ENCODE measurements at regions of chr11 and their contacts with region 1.

Region 1: GRCh38 chr11:66677599-66678375 is at the start of gene RBM4B:
- DNase-seq: peak; percentile 94
- H3K4me3 Mint-ChIP-seq: peak within 1 kb of the TSS; percentile 95
- H3K27ac Mint-ChIP-seq: peak within 1 kb of the TSS; percentile 97
- H3K4me1 Mint-ChIP-seq: peaks cover 35% of the 10 kb centered on the region
- H3K27me3 Mint-ChIP-seq: no peaks in the 10 kb centered on the region
- total RNA-seq, gene RBM4B: 14.3 and 16.6 TPM in 2 replicates

Region 2: GRCh38 chr11:66288671-66289547 is 388.9 kb before region 1 on chr11 and contains the start of gene YIF1A:
- intact Hi-C with region 1: loop called (anchors 1 kb)
- DNase-seq: peak; percentile 99
- H3K4me3 Mint-ChIP-seq: peak within 1 kb of the TSS; percentile 95
- H3K27ac Mint-ChIP-seq: peak within 1 kb of the TSS; percentile 99
- H3K4me1 Mint-ChIP-seq: peaks cover 39% of the 10 kb centered on the region
- H3K27me3 Mint-ChIP-seq: peaks cover 28% of the 10 kb centered on the region
- total RNA-seq, gene YIF1A: 125 and 127 TPM in 2 replicates

Region 3: DNA sequence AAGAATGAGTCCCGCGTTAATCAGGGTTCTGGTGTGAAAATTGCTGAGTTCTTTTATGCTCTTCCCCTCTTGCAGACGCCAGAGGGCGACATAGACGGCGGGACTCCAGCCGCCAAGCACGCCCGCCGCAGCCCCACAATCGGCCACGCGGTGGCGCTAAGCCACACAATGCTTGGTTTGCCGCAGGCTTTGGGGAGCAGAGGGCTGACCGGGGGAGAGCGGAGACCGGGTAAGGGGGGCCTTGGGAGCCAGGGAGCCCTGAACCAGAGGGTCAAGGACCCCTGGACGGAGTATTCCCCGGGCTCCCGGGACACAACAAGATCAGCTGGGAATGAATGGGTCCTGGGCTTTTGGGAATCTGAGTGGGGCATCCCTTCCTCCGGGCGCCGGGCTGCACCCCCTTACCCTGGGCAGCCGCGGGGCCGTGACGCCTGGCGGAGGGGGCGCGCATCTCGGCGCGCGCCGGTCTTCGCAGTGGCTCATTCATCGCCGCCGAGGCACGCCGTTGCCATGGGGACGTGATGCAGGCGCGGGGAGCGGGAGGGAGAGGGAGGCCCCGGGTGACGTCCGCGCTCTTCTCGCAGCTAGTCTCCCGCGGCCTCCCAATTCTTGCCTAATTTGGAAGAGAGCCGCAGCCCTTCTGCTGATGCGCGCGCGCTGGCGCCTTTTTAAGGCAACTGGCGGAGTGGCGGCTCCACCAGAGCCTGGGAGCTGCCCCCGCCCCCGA is 269.1 kb before region 1 on chr11:
- intact Hi-C with region 1: loop called (anchors 1 kb)
- DNase-seq: peak; percentile 86
- H3K4me3 Mint-ChIP-seq: peak overlapping the region; percentile 84
- H3K27ac Mint-ChIP-seq: peak overlapping the region; percentile 72
- H3K4me1 Mint-ChIP-seq: peaks cover 9% of the 10 kb centered on the region
- H3K27me3 Mint-ChIP-seq: peaks cover 21% of the 10 kb centered on the region

Region 4: DNA sequence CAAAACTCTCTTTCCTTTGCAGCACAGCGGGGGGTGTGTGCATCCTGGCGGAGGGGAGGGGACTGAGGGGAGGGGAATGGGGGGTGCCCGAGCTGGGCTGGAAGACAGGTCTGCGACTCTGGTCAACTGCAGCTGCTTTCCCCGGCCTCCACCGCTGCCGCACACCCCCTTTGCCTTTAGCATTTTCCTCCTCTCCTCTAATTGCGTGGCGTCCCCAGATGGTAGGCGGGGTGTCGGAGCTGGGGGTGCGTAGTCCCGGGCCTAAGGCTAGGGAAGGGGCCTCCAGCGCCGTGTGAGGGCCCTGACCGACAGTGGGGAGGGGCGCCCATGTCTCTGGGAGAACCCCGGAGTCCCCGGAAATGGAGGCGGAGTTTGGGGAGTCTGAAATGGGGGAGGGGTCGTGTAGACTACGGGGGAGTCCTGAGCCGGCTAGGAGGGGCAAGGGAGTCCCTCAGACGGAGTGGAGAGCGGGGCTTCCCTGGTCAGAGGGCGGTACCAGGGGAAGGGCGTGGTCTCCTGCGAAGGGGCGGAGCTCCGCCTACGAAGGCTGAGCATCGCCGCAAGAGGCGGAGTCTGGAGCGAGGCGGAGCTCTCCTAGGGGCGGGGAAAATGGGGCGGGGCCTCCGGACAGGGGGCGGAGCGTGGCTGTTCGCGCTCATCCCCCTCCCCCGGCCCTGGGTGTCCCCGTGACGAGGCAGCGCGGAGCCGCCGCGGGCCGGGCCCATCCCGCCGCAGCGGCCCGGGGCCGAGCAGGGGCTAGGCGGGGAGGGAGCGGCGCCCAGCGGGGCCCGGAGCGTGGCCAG is 211.4 kb before region 1 on chr11 and contains the start of gene PELI3:
- intact Hi-C with region 1: loop called (anchors 1 kb)
- DNase-seq: peak; percentile 86
- H3K4me3 Mint-ChIP-seq: peak within 1 kb of the TSS; percentile 94
- H3K27ac Mint-ChIP-seq: peak within 1 kb of the TSS; percentile 88
- H3K4me1 Mint-ChIP-seq: peaks cover 28% of the 10 kb centered on the region
- H3K27me3 Mint-ChIP-seq: no peaks in the 10 kb centered on the region
- total RNA-seq, gene PELI3: 15.3 and 15.8 TPM in 2 replicates

Region 5: DNA sequence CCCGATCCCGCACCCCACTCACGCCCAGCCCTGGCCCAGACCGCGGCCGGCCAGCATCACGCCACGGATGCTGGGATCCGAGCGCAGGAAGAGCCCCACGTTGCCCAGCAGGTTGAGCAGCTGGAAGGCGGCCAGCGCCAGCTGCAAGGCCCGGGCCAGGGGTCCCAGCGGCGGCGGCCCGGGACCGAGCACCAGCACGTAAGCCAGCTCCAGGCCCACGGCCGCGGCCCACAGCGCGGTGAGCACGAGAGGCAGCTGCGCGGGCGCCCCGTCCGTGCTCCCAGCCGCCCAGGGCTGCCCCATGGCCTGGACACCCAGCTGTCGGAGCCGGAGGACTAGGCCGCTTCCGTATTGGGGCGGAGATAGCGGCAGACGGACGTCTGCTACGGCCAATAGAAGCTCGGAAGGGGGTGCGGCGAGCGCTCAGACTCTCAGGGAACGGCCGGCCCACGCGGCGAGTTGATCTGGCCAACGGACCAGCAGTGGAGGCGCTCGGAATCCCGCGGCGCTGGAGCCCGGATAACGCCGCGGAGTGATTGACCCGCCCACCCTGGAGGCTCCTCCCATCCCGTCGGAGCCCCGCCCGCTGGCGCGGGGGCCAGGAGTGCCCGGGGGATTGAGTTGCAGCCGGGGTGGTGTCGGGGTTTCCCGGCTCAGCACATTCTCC is 132.0 kb before region 1 on chr11 and contains the start of gene ZDHHC24:
- intact Hi-C with region 1: loop called (anchors 1 kb)
- DNase-seq: peak; percentile 86
- H3K4me3 Mint-ChIP-seq: peak within 1 kb of the TSS; percentile 88
- H3K27ac Mint-ChIP-seq: peak within 1 kb of the TSS; percentile 47
- H3K4me1 Mint-ChIP-seq: peaks cover 28% of the 10 kb centered on the region
- H3K27me3 Mint-ChIP-seq: peaks cover 10% of the 10 kb centered on the region
- total RNA-seq, gene ZDHHC24: 14.6 and 15.6 TPM in 2 replicates

Region 6: GRCh38 chr11:66616379-66617154 is 61.2 kb before region 1 on chr11 and contains the start of gene RBM14:
- intact Hi-C with region 1: loop called (anchors 1 kb)
- DNase-seq: peak; percentile 99
- H3K4me3 Mint-ChIP-seq: peak within 1 kb of the TSS; percentile 97
- H3K27ac Mint-ChIP-seq: peak within 1 kb of the TSS; percentile 98
- H3K4me1 Mint-ChIP-seq: peaks cover 36% of the 10 kb centered on the region
- H3K27me3 Mint-ChIP-seq: no peaks in the 10 kb centered on the region
- total RNA-seq, gene RBM14: 198 and 200 TPM in 2 replicates

Region 7: GRCh38 chr11:66715346-66716085 is 37.7 kb after region 1 on chr11:
- intact Hi-C with region 1: no loop called
- DNase-seq: no peak
- H3K4me3 Mint-ChIP-seq: no peak overlapping the region
- H3K27ac Mint-ChIP-seq: no peak overlapping the region
- H3K4me1 Mint-ChIP-seq: peaks cover 7% of the 10 kb centered on the region
- H3K27me3 Mint-ChIP-seq: peaks cover 8% of the 10 kb centered on the region

Region 8: GRCh38 chr11:67401495-67402191 is 723.9 kb after region 1 on chr11 and contains the start of gene PPP1CA:
- intact Hi-C with region 1: no loop called
- DNase-seq: peak; percentile 87
- H3K4me3 Mint-ChIP-seq: peak within 1 kb of the TSS; percentile 92
- H3K27ac Mint-ChIP-seq: peak within 1 kb of the TSS; percentile 86
- H3K4me1 Mint-ChIP-seq: peaks cover 50% of the 10 kb centered on the region
- H3K27me3 Mint-ChIP-seq: no peaks in the 10 kb centered on the region
- total RNA-seq, gene PPP1CA: 260 and 263 TPM in 2 replicates